Sigmoid colon (tissue), 7 donors: ENCODE measurements at regions of chr3 and their contacts with region 1.

Region 1: GRCh38 chr3:53709860-53710674 is 136.2 kb downstream of the CHDH start:
- DNase-seq: peak; percentile 84
- H3K4me3 ChIP-seq: no peak overlapping the region
- H3K27ac ChIP-seq: no peak overlapping the region
- H3K4me1 ChIP-seq: peaks cover 0 to 6% (median 0%) of the 10 kb centered on the region in 4 donors
- H3K27me3 ChIP-seq: no peaks in the 10 kb centered on the region
- CTCF ChIP-seq: peak; percentile 67 to 87 (median 80)
- EP300 ChIP-seq: no peak
- POLR2A ChIP-seq: no peak

Region 2: GRCh38 chr3:53114011-53114400 is 596.1 kb before region 1 on chr3:
- intact Hi-C with region 1: loop called (anchors 10 kb)
- DNase-seq: peak; percentile 92
- H3K4me3 ChIP-seq: no peak overlapping the region
- H3K27ac ChIP-seq: peak overlapping the region; percentile 37 to 82 (median 79)
- H3K4me1 ChIP-seq: peaks cover 0 to 50% (median 43%) of the 10 kb centered on the region in 4 donors
- H3K27me3 ChIP-seq: no peaks in the 10 kb centered on the region
- CTCF ChIP-seq: peak; percentile 92 to 99 (median 94)
- EP300 ChIP-seq: no peak
- POLR2A ChIP-seq: no peak

Region 3: DNA sequence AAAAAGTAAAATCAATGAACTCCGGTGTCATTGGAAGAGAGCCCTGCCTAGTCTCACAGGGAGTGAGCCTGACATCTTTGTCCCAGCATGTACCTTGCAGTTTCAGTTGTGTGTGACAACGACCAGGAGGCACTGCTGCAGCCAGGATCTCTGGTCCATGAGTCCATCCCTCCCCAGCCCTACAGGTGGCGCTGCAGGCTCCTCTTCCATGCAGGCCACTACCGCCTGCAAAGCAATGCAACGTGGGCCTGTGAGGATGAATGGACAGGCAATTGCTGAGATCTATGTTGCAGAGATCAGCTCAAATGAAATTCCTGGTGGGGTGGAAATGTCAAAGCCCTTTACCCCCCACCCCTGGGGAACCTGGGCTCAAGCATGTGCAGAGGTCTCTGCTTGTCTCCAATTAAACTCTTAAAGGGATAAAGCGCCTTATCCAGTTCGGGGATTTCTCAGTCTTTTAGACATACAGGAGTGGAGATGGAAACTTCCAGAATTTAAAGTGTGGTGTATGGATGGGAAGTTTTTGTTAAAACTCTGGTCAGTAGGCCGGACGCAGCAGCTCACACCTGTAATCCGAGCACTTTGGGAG is 490.1 kb before region 1 on chr3:
- intact Hi-C with region 1: loop called (anchors 5 kb)
- DNase-seq: peak; percentile 89
- H3K4me3 ChIP-seq: no peak overlapping the region
- H3K27ac ChIP-seq: no peak overlapping the region
- H3K4me1 ChIP-seq: peaks cover 0 to 3% (median 0%) of the 10 kb centered on the region in 4 donors
- H3K27me3 ChIP-seq: no peaks in the 10 kb centered on the region
- CTCF ChIP-seq: peak; percentile 74 to 85 (median 83)
- EP300 ChIP-seq: no peak
- POLR2A ChIP-seq: no peak

Region 4: GRCh38 chr3:53303957-53304356 is 406.1 kb before region 1 on chr3:
- intact Hi-C with region 1: loop called (anchors 2 kb)
- DNase-seq: no peak
- H3K4me3 ChIP-seq: no peak overlapping the region
- H3K27ac ChIP-seq: peak overlapping the region in 3 of 4 donors; percentile 21 to 31 (median 29)
- H3K4me1 ChIP-seq: peaks cover 0 to 23% (median 19%) of the 10 kb centered on the region in 4 donors
- H3K27me3 ChIP-seq: no peaks in the 10 kb centered on the region
- CTCF ChIP-seq: no peak
- EP300 ChIP-seq: no peak
- POLR2A ChIP-seq: no peak

Region 5: DNA sequence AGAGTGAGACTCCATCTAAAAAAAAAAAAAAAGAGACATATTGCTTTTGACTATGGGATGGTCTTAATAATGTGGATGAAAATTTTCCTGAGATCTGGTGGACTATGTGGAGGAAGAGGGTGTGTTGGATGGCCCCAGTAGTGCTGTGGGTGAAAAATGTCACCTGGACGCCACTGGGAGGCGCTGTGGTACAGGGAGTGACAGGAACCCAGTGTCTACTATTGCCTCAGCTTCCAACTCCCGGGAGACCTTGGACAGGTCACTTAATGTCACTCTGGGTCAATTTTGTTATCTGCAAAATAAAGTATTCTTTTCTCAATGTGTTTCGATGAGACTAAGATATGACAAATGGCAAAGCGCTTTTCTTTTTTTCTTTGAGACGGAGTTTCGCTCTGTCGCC is 335.0 kb before region 1 on chr3:
- intact Hi-C with region 1: loop called (anchors 1 kb)
- DNase-seq: peak; percentile 77
- H3K4me3 ChIP-seq: no peak overlapping the region
- H3K27ac ChIP-seq: no peak overlapping the region
- H3K4me1 ChIP-seq: no peaks in the 10 kb centered on the region
- H3K27me3 ChIP-seq: no peaks in the 10 kb centered on the region
- CTCF ChIP-seq: peak; percentile 76 to 82 (median 78)
- EP300 ChIP-seq: no peak
- POLR2A ChIP-seq: no peak

Region 6: DNA sequence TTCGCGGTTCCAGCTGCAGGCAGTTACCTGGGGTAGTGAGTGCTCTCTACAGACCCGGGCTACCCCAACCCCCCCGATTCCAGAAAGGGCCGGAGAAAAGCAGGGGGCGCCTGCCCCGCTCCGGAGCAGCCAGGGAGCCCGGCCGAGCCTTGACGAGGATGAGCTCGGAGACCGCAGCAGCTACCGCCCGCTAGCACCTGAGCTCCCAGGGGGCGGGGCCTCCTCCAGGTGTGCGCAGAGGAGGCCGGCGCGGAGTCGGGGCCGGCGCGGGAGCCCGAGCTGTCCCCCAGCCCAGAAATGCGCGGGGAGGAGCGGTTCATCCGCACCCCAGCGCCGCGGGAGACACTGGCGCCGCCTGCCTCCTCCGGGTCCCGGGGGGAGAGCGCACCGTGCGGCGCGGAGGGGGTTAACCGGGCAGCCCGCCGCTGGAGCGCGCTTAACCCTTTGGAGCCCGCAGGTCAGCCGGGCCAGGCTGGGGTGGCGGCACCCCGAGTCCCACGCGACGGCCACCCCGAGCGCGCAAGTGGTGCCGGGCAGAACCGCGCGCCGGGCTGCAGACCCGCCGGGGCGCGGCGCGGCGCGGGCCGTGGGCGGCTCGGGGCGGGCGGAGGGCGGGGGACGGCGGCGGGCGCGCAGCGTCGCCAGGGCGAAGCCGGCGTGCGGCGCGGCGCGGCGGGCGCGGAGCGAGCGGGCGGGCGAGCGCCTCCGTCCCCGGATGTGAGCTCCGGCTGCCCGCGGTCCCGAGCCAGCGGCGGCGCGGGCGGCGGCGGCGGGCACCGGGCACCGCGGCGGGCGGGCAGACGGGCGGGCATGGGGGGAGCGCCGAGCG is 215.9 kb before region 1 on chr3 and contains the start of gene CACNA1D:
- intact Hi-C with region 1: loop called (anchors 5 kb)
- DNase-seq: no peak
- H3K4me3 ChIP-seq: peak within 1 kb of the TSS; percentile 47 to 64 (median 60)
- H3K27ac ChIP-seq: peak within 1 kb of the TSS in 3 of 4 donors; percentile 53 to 66 (median 65)
- H3K4me1 ChIP-seq: peaks cover 0 to 52% (median 48%) of the 10 kb centered on the region in 4 donors
- H3K27me3 ChIP-seq: peaks cover 0 to 12% (median 0%) of the 10 kb centered on the region in 3 donors
- CTCF ChIP-seq: no peak
- EP300 ChIP-seq: no peak
- POLR2A ChIP-seq: no peak
- total RNA-seq, gene CACNA1D: 4.8 to 9.7 (median 5.4) TPM

Region 7: GRCh38 chr3:53658613-53659193 is 51.4 kb before region 1 on chr3:
- intact Hi-C with region 1: no loop called
- DNase-seq: no peak
- H3K4me3 ChIP-seq: no peak overlapping the region
- H3K27ac ChIP-seq: no peak overlapping the region
- H3K4me1 ChIP-seq: no peaks in the 10 kb centered on the region
- H3K27me3 ChIP-seq: no peaks in the 10 kb centered on the region
- CTCF ChIP-seq: no peak
- EP300 ChIP-seq: no peak
- POLR2A ChIP-seq: no peak